Cardiac septum (tissue), 1 donor: ENCODE measurements at regions of chr6 and their contacts with region 1.

Region 1: GRCh38 chr6:105209950-105210706 is 30.3 kb upstream of the POPDC3 start:
- DNase-seq: no peak

Region 2: DNA sequence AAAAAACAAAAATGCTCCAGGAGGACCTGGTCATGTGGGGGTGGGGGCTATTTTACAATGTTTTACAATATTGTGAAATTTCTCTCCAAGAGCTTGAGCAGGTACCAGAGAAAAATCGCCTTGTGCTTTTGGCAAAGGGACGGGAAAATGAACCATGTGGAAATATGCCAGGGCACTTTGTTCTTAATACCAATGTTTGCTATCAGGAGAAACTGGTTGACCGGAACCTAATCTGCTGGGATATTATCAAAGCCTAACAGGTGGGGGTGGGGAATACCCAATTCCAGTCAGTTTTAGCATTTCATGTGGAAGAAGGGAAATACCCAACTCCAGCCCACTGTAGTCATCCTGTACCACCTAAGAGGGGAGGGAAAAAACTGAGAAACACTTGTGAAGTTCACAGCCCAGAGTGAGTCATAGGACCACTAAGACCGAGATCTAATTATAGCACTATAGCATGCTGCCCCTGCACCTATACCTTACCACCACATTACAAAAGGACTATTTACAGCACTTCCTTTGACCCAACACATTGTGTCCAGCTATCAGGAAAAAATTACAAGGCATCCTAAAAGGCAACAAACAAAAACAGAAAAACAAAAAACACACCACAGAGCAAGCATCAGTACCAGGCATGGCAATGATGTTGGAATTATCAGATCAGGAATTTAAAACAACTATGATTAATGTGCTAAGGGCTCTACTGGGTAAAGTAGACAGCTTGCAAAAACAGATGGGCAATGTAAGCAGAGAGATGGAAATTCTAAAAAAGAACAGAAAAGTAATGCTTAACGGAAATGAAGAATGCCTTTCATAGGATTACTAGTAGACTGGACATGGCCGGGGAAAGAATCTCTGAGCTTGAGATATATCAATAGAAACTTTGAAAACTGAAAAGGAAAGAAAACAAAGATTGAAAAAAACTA is 53.8 kb after region 1 on chr6:
- intact Hi-C with region 1: loop called (anchors 10 kb)
- DNase-seq: no peak